Breast epithelium (tissue), 4 donors: ENCODE measurements at regions of chr19 and their contacts with region 1.

Region 1: GRCh38 chr19:3275583-3276340 is 51.3 kb downstream of the CELF5 start:
- DNase-seq: peak; percentile 75 to 77
- H3K4me3 ChIP-seq: peak overlapping the region in 2 of 3 donors; percentile 53 to 67
- H3K27ac ChIP-seq: no peak overlapping the region
- H3K4me1 ChIP-seq: no peaks in the 10 kb centered on the region
- H3K27me3 ChIP-seq: peaks cover 5 to 10% of the 10 kb centered on the region in 2 donors
- CTCF ChIP-seq: no peak
- POLR2A ChIP-seq: no peak

Region 2: GRCh38 chr19:2041683-2042484 is 1233.9 kb before region 1 on chr19:
- intact Hi-C with region 1: no loop called
- DNase-seq: peak; percentile 99
- H3K4me3 ChIP-seq: peak overlapping the region; percentile 16 to 63 (median 30)
- H3K27ac ChIP-seq: peak overlapping the region; percentile 96 to 99
- H3K4me1 ChIP-seq: peaks cover 29 to 47% of the 10 kb centered on the region in 2 donors
- H3K27me3 ChIP-seq: no peaks in the 10 kb centered on the region
- CTCF ChIP-seq: no peak
- POLR2A ChIP-seq: no peak

Region 3: GRCh38 chr19:2817313-2817712 is 458.4 kb before region 1 on chr19:
- intact Hi-C with region 1: loop called (anchors 5 kb)
- DNase-seq: no peak
- H3K4me3 ChIP-seq: no peak overlapping the region
- H3K27ac ChIP-seq: no peak overlapping the region
- H3K4me1 ChIP-seq: no peaks in the 10 kb centered on the region
- H3K27me3 ChIP-seq: no peaks in the 10 kb centered on the region
- CTCF ChIP-seq: no peak
- POLR2A ChIP-seq: no peak

Region 4: DNA sequence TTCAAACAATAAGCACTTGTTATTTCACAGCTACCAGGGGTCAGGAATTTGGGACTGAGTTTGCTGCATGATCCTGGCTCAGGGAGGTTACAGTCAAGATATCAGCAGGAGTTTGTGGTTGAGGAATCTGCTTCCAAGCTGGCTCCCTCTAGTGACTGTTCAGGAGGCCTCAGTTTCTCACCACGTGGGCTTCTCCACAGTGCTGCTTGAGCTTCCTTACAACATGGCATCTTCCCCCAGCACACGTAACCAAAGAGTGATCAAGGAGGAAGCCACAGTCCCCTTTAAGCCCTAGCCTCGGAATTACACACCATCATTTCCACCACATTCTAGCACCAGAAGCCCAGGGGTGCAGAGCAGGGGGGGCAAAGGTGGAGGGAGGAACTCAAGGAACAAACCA is 22.5 kb before region 1 on chr19:
- intact Hi-C with region 1: no loop called
- DNase-seq: no peak
- H3K4me3 ChIP-seq: no peak overlapping the region
- H3K27ac ChIP-seq: no peak overlapping the region
- H3K4me1 ChIP-seq: no peaks in the 10 kb centered on the region
- H3K27me3 ChIP-seq: peaks cover 0 to 11% of the 10 kb centered on the region in 2 donors
- CTCF ChIP-seq: no peak
- POLR2A ChIP-seq: no peak